ENCODE measurements at regions of chr12 and their contacts with region 1.

Region 1: DNA sequence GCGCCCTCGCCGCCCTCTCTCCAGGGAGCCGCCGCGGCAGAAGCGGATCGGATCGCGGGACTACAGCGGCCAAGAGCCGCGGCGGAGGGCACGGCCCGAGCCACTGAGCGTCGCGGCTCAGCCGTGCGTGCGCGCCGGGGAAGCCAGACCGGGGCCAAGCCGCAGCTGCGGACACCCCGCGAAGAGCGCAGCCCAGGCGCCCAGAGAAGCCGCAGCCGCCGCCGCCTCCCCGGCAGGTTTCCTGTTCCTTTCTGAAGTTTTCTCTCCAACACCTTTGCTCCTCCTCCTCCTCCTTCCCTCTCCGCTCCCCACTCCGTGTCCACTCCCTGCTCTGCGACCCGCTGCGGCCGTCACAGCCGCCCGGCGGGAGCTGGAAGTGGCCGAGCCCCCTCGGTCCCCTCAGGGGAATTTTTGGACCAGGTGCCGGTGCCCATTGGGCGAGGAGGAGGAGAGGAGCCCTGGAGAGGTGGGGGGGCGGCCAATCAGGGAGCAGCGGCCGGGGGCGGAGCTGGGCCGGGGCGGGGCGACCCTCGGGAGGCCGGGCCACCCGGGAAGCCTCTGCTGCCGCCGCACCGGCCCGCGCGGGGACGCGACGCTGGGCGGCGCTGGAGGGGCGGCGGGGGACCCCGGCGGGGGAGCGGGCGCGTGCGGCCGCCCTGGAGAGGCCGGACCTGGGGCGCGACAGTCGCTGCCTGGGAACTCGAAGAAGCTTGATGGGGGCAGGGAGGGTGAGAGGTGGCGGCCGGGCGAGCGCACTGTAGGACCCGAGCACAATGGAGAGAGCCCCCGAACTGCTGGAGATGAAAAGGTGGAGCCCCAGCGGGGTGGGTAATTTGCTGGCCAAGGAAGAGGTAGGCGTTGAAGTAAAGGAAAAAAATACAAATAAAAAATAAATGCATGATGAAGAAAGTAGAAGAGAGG is at the start of gene ITPR2:
- DNase-seq: no peak
- H3K4me3 ChIP-seq: peak within 1 kb of the TSS; percentile 71
- H3K27me3 ChIP-seq: no peaks in the 10 kb centered on the region
- CTCF ChIP-seq: no peak
- polyA plus RNA-seq, gene ITPR2: 3.5 and 6.1 TPM in 2 replicates

Region 2: DNA sequence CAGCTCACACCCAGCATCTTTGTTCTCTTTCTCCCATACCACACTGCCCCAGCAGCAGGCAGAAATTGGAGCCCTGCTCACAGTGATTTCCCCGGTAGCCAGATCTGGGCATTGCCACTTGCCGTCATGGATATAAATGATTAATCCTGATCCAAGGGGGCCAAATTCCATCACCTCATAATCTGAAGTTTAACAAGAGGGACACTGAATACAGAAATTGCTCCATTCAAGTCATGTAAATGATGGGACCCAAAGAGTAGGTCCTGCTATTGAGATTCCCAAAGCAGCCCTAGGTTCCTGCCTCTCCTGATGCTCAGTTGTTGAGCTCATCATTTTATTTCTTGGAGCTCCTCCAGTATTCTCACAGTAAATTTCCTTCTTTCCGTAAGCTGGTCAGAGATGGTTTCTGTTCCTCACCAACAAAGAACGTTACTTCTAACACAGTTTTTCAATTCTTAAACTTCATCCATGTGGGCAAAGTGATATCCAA is 11.8 kb before region 1 on chr12:
- CTCF ChIA-PET with region 1: interaction called, 14 read pairs
- POLR2A ChIA-PET with region 1: interaction called, 4 read pairs
- DNase-seq: no peak
- H3K4me3 ChIP-seq: no peak overlapping the region
- H3K27me3 ChIP-seq: no peaks in the 10 kb centered on the region
- CTCF ChIP-seq: no peak

Region 3: DNA sequence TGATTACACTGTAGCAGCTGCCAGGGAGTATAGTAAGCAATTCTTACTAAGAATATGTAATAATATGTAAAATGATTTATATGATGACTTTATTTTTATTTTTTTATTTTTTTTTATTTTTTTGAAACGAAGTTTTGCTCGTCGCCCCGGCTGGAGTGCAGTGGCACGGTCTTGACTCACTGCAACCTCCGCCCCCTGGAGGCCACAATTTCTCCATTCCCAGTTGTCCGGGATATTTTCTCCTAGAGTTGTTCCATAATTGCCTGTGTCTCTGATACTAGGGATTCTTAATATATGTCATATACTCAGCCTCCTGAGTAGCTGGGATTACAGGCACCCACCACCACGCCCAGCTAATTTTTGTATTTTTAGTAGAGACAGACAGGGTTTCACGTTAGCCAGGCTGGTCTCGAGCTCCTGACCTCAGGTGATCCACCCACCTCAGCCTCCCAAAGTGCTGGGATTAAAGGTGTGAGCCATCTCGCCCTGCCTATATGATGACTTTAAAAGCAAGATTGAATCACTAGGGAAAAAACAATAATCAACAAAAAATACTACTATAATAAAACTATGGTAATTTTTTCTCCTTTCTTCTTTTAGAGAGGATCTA is 12.1 kb after region 1 on chr12:
- CTCF ChIA-PET with region 1: interaction called, 40 read pairs
- POLR2A ChIA-PET with region 1: interaction called, 3 read pairs
- DNase-seq: no peak
- H3K4me3 ChIP-seq: no peak overlapping the region
- H3K27me3 ChIP-seq: peaks cover 1% of the 10 kb centered on the region; the same call in 1 of the 2 replicates
- CTCF ChIP-seq: peak; percentile 65